ENCODE measurements at regions of chr18 and their contacts with region 1.

Region 1: GRCh38 chr18:76982841-76983587 is 149.6 kb downstream of the MBP start:
- DNase-seq: peak; percentile 93
- CTCF ChIP-seq: peak; percentile 87

Region 2: DNA sequence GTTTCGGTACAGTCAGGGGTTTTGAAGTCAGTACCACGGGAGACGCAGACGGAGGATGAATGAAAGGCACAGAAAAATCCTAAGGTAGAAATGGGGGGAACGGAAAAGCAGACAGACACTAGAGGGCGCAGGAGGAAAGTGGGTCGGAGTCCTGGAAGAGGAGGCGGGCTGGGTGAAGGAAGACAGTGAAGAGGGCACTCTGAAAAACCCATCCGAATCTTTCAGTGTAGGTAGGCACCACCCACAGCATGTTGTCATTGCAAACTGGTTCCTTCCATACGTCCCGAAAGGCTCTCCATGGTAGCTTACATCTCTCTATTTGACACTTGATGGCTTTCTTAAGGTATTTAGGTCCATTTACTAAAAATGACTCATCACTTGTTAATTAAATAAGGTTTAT is 179.2 kb before region 1 on chr18:
- in situ Hi-C with region 1: loop called (anchors 10 kb)
- DNase-seq: peak; percentile 77
- CTCF ChIP-seq: peak; percentile 83

Region 3: GRCh38 chr18:77178559-77178958 is 195.5 kb after region 1 on chr18:
- in situ Hi-C with region 1: no loop called
- DNase-seq: no peak
- CTCF ChIP-seq: no peak

Region 4: GRCh38 chr18:77650799-77651385 is 667.9 kb after region 1 on chr18:
- in situ Hi-C with region 1: loop called (anchors 25 kb)
- DNase-seq: peak; percentile 86
- CTCF ChIP-seq: peak; percentile 86

Measured in GM13976 (cell line).